Caco-2 (cell line): ENCODE measurements at regions of chr5 and their contacts with region 1.

Region 1: GRCh38 chr5:135565725-135566421 is 12.9 kb downstream of the CXCL14 start:
- DNase-seq: peak; percentile 78 to 86
- H3K4me3 ChIP-seq: no peak overlapping the region
- H3K4me3 Mint-ChIP-seq: no peak overlapping the region
- H3K27ac Mint-ChIP-seq: no peak overlapping the region
- H3K4me1 ChIP-seq: no peaks in the 10 kb centered on the region; the same call in 1 of the 2 replicates
- H3K4me1 Mint-ChIP-seq: peaks cover 2% of the 10 kb centered on the region
- H3K27me3 ChIP-seq: no peaks in the 10 kb centered on the region
- H3K27me3 Mint-ChIP-seq: no peaks in the 10 kb centered on the region
- CTCF ChIP-seq: peak; percentile 88 to 97

Region 2: GRCh38 chr5:135466178-135467050 is 99.5 kb before region 1 on chr5:
- CTCF ChIA-PET with region 1: interaction called, 55 read pairs
- POLR2A ChIA-PET with region 1: interaction called, 3 read pairs
- intact Hi-C with region 1: loop called (anchors 1 kb)
- DNase-seq: peak; percentile 77 to 84
- H3K4me3 ChIP-seq: no peak overlapping the region
- H3K4me3 Mint-ChIP-seq: no peak overlapping the region
- H3K27ac Mint-ChIP-seq: no peak overlapping the region
- H3K4me1 ChIP-seq: no peaks in the 10 kb centered on the region; the same call in 1 of the 2 replicates
- H3K4me1 Mint-ChIP-seq: peaks cover 6% of the 10 kb centered on the region
- H3K27me3 ChIP-seq: peaks cover 1% of the 10 kb centered on the region
- H3K27me3 Mint-ChIP-seq: peaks cover 18% of the 10 kb centered on the region
- CTCF ChIP-seq: peak; percentile 91 to 97

Region 3: DNA sequence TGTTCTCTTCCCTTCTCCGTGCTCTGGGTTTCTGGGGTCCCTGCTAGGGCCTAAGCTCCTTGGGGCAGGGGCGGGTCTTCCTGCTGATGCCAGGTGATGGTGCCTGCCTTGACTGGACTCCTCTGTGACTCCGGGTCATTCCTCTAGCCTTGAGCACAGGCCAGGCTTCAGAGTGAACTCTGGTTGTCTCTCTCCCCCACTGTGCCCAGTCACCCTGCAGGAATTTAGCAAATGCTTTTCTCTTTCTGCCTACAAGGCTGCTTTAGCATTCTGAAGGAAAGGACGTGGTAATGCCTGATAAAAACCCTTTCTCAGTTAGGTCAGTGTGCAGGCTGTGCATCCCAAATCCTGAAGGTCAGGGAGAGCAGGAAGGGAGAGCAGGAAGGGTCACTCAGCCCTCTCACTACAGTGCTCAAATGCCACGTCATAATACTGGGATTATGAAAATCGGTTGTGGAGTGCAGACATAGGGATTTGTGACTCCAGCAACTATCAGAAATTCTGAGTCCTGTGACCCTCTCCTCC is 10.3 kb after region 1 on chr5:
- CTCF ChIA-PET with region 1: interaction called, 10 read pairs
- POLR2A ChIA-PET with region 1: no interaction called
- intact Hi-C with region 1: no loop called
- DNase-seq: no peak
- H3K4me3 ChIP-seq: no peak overlapping the region
- H3K4me3 Mint-ChIP-seq: no peak overlapping the region
- H3K27ac Mint-ChIP-seq: no peak overlapping the region
- H3K4me1 ChIP-seq: no peaks in the 10 kb centered on the region
- H3K4me1 Mint-ChIP-seq: no peaks in the 10 kb centered on the region
- H3K27me3 ChIP-seq: no peaks in the 10 kb centered on the region
- H3K27me3 Mint-ChIP-seq: peaks cover 15% of the 10 kb centered on the region
- CTCF ChIP-seq: no peak

Region 4: GRCh38 chr5:135829681-135830383 is 264.0 kb after region 1 on chr5:
- CTCF ChIA-PET with region 1: interaction called, 28 read pairs
- POLR2A ChIA-PET with region 1: no interaction called
- intact Hi-C with region 1: loop called (anchors 1 kb)
- DNase-seq: peak; percentile 63 to 75
- H3K4me3 ChIP-seq: no peak overlapping the region
- H3K4me3 Mint-ChIP-seq: no peak overlapping the region
- H3K27ac Mint-ChIP-seq: no peak overlapping the region
- H3K4me1 ChIP-seq: no peaks in the 10 kb centered on the region
- H3K4me1 Mint-ChIP-seq: peaks cover 7% of the 10 kb centered on the region
- H3K27me3 ChIP-seq: peaks cover 5% of the 10 kb centered on the region; the same call in 1 of the 2 replicates
- H3K27me3 Mint-ChIP-seq: peaks cover 39% of the 10 kb centered on the region
- CTCF ChIP-seq: peak; percentile 86 to 93